Caco-2 (cell line): ENCODE measurements at regions of chr1 and their contacts with region 1.

Region 1: GRCh38 chr1:226342656-226343055 is 33.7 kb upstream of the LIN9 start:
- DNase-seq: no peak
- H3K4me3 ChIP-seq: no peak overlapping the region
- H3K4me3 Mint-ChIP-seq: no peak overlapping the region
- H3K27ac Mint-ChIP-seq: no peak overlapping the region
- H3K4me1 ChIP-seq: no peaks in the 10 kb centered on the region
- H3K4me1 Mint-ChIP-seq: no peaks in the 10 kb centered on the region
- H3K27me3 ChIP-seq: no peaks in the 10 kb centered on the region
- H3K27me3 Mint-ChIP-seq: no peaks in the 10 kb centered on the region
- CTCF ChIP-seq: no peak

Region 2: GRCh38 chr1:226325178-226325577 is 17.5 kb before region 1 on chr1:
- CTCF ChIA-PET with region 1: no interaction called
- POLR2A ChIA-PET with region 1: no interaction called
- intact Hi-C with region 1: loop called (anchors 2 kb)
- DNase-seq: no peak
- H3K4me3 ChIP-seq: no peak overlapping the region
- H3K4me3 Mint-ChIP-seq: no peak overlapping the region
- H3K27ac Mint-ChIP-seq: no peak overlapping the region
- H3K4me1 ChIP-seq: no peaks in the 10 kb centered on the region
- H3K4me1 Mint-ChIP-seq: no peaks in the 10 kb centered on the region
- H3K27me3 ChIP-seq: no peaks in the 10 kb centered on the region
- H3K27me3 Mint-ChIP-seq: peaks cover 2% of the 10 kb centered on the region
- CTCF ChIP-seq: no peak